Breast epithelium (tissue), 4 donors: ENCODE measurements at regions of chr9 and their contacts with region 1.

Region 1: GRCh38 chr9:137205126-137206069 is at the starts of genes NDOR1 and TMEM203:
- DNase-seq: peak; percentile 79 to 93
- H3K4me3 ChIP-seq: peak within 1 kb of the TSS; percentile 95 to 98 (median 98)
- H3K27ac ChIP-seq: peak within 1 kb of the TSS; percentile 89 to 92
- H3K4me1 ChIP-seq: peaks cover 13 to 29% of the 10 kb centered on the region in 2 donors
- H3K27me3 ChIP-seq: no peaks in the 10 kb centered on the region
- CTCF ChIP-seq: no peak
- POLR2A ChIP-seq: peak; percentile 65
- total RNA-seq, gene NDOR1: 4.6 to 9.5 (median 7.2) TPM
- total RNA-seq, gene TMEM203: 26.5 to 36.6 (median 26.6) TPM

Region 2: GRCh38 chr9:136493567-136493971 is 711.8 kb before region 1 on chr9:
- intact Hi-C with region 1: loop called (anchors 5 kb)
- DNase-seq: no peak
- H3K4me3 ChIP-seq: no peak overlapping the region
- H3K27ac ChIP-seq: no peak overlapping the region
- H3K4me1 ChIP-seq: no peaks in the 10 kb centered on the region
- H3K27me3 ChIP-seq: no peaks in the 10 kb centered on the region
- CTCF ChIP-seq: no peak
- POLR2A ChIP-seq: no peak

Region 3: DNA sequence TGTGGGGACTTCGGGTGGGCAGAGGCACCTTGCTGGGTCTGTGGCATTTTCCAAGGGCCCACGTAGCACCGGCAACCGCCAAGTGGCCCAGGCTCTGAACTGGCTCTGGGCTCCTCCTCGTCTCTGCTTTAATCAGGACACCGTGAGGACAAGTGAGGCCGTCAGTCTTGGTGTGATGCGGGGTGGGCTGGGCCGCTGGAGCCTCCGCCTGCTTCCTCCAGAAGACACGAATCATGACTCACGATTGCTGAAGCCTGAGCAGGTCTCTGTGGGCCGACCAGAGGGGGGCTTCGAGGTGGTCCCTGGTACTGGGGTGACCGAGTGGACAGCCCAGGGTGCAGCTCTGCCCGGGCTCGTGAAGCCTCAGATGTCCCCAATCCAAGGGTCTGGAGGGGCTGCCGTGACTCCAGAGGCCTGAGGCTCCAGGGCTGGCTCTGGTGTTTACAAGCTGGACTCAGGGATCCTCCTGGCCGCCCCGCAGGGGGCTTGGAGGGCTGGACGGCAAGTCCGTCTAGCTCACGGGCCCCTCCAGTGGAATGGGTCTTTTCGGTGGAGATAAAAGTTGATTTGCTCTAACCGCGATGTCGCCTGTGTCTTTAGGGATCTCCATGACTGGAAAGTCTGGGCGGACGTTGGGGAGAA is 96.7 kb before region 1 on chr9:
- intact Hi-C with region 1: no loop called
- DNase-seq: no peak
- H3K4me3 ChIP-seq: no peak overlapping the region
- H3K27ac ChIP-seq: no peak overlapping the region
- H3K4me1 ChIP-seq: no peaks in the 10 kb centered on the region
- H3K27me3 ChIP-seq: no peaks in the 10 kb centered on the region
- CTCF ChIP-seq: no peak
- POLR2A ChIP-seq: no peak

Region 4: DNA sequence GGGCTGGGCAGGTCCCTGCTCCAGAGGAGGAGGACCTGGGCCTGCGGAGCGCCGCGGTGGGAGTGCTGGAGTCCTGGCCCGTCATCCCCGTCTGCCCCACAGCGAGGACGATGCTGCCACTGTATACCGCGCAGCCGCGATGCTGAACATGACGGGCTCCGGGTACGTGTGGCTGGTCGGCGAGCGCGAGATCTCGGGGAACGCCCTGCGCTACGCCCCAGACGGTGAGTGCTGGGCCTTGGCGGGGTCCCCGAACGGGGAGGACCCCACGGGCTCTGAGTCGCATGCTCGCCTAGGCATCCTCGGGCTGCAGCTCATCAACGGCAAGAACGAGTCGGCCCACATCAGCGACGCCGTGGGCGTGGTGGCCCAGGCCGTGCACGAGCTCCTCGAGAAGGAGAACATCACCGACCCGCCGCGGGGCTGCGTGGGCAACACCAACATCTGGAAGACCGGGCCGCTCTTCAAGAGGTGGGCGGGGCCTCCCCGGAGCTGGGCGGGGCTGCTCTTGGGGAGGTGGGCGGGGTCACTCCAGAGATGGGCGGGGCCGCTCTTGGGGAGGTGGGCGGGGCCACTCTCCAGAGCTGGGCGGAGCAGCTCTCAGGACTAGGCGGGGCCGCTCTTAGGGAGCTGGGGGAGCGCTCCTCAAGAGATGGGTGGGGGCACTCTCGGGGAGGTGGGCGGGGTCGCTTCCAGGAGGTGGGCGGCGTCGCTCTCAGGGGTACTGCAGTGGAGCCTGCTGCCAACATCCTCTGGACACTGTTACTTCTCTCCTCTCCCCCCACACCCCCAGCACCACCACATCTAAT is 48.6 kb before region 1 on chr9:
- intact Hi-C with region 1: no loop called
- DNase-seq: no peak
- H3K4me3 ChIP-seq: peak overlapping the region in 2 of 3 donors; percentile 3 to 46
- H3K27ac ChIP-seq: no peak overlapping the region
- H3K4me1 ChIP-seq: no peaks in the 10 kb centered on the region
- H3K27me3 ChIP-seq: peaks cover 3 to 72% of the 10 kb centered on the region in 2 donors
- CTCF ChIP-seq: no peak
- POLR2A ChIP-seq: no peak

Region 5: DNA sequence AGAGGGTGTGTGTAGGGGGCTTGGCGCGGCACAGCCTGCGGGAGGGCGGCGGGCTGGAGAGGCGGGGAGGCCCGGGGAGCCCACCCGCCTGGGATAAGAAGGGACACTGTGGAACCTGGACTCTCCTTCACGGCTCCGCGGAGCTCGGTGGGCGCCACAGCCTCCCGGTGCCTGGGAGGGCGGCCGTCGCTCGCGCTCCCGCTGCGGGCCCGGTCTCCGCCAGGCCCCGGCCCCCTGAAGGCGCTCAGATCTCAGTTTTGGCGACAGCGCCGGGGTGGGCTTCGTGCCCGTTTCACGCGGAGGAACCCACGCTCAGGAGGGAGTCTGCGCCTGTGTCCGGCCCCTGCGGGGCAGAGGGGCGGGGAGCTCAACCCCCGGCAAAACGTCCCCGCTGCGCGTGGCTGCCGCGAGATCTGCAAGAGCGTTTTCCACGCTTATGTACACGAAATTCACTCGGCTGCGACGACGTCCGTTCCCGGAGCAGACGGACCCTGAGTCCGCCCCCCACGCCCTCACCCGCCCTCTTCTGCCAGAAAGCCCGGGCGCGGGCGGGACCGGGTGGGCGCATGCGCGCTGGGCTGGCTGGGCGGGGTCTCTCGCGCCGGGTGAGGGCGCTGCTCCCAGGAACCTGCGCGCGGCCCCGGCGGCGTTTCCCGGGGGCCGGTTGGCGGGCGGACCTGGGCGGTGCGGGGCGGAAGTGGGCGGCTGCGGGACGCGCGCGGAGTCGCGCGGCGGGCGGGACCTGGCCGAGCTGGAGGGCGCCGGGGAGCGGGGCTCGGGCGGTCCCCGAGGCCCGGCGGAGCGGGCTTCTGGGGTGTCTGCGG is 49.4 kb after region 1 on chr9 and contains the start of gene NELFB:
- intact Hi-C with region 1: no loop called
- DNase-seq: peak; percentile 83 to 92
- H3K4me3 ChIP-seq: peak within 1 kb of the TSS; percentile 98 to 100 (median 99)
- H3K27ac ChIP-seq: peak within 1 kb of the TSS; percentile 55 to 84
- H3K4me1 ChIP-seq: peaks cover 5 to 12% of the 10 kb centered on the region in 2 donors
- H3K27me3 ChIP-seq: no peaks in the 10 kb centered on the region
- CTCF ChIP-seq: no peak
- POLR2A ChIP-seq: no peak
- total RNA-seq, gene NELFB: 32.6 to 39.2 (median 38.7) TPM

Region 6: DNA sequence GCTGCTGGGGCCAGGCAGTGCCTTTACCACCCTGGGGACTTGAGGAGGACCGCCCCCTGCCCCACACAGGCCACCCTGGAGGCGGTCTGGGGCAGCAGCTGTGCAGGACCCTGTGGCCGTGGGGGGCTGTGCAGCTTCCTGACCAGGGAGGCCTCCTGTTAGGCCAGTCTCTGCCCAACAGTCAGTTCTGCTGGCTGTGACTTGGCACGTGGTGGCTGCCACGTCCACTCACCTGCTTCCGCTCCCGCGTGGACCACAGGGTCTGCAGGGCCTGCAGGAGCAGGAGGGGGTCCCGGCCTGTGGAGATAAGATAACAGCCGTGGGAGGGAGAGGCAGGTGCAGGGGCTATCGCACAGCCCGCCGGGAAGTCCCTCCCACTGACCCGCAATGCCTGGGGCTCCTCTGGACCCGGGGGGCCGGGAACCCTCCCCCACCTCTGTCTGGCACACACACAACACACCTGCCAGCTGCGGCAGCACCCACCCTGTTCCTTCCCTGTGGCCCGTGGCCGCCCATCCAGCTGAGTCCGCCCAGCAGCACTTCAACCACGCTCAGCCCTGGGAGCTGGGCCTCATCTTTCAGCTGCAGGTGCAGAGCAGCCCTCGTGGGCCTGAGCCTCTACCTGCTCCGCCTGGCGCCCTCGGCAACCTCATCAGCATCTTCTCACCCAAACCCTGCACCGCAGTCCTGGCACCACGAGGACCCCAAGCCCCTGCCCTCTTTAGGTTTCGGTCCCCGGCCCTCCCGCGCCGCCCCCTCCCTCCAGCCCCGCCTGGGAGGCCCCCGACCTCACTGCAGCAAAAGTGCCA is 177.9 kb after region 1 on chr9:
- intact Hi-C with region 1: no loop called
- DNase-seq: no peak
- H3K4me3 ChIP-seq: no peak overlapping the region
- H3K27ac ChIP-seq: no peak overlapping the region
- H3K4me1 ChIP-seq: no peaks in the 10 kb centered on the region
- H3K27me3 ChIP-seq: no peaks in the 10 kb centered on the region
- CTCF ChIP-seq: no peak
- POLR2A ChIP-seq: no peak